ENCODE measurements at regions of chr22 and their contacts with region 1.

Region 1: DNA sequence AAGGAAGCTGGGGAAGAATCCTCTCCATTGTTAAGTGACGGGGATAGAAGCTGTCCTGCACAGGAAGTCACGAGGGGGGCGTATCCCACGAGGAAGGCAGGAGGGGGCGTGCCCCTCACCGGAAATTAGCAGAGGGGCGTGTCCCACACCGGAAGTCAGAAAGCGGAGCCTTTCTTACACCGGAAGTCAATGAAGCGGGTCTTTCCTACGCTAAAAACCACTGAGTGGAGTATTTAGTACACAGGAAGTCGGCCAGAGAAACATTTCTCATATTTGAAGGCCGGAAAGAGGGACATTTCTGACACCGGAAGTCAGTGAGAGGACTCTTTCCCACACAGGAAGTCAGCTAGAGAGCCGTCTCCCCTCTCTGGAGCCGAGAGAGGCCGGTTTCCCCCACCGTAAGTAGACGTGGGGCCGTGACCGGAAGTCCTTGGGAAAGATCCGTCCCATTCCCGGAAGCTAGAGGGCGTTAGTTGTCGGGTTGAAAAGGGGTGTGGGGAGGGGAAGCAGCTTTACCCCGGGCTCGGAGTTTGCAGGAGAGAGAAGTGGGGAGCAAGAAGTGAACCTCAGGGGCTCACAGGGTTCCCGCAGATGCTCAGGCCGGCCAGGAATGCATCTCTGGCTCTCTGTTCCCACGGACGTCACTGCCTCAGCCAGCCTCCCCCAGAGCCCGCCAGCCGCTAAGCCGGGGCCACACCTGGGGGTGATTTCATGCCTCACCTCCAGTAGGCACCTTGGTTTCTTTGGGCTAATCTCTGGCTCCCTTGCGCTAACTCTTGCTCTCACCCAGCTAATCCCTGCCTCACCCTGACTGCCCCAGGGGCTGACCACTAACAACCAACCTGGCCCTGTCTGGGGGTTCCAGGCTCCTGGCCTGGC is 15.4 kb downstream of the MIAT start:
- DNase-seq: peak; percentile 90 to 92
- H3K4me3 ChIP-seq: peak overlapping the region; percentile 57 to 82 (median 76)
- H3K27ac ChIP-seq: peak overlapping the region; percentile 94 to 98 (median 94)
- H3K4me1 ChIP-seq: peaks cover 19 to 32% of the 10 kb centered on the region in 2 donors
- H3K27me3 ChIP-seq: no peaks in the 10 kb centered on the region
- CTCF ChIP-seq: peak in 4 of 6 experiments; percentile 27 to 55 (median 50)
- POLR2A ChIP-seq: peak in 1 of 2 donors; percentile 51

Region 2: GRCh38 chr22:26364066-26365015 is 308.5 kb before region 1 on chr22:
- intact Hi-C with region 1: loop called (anchors 10 kb)
- DNase-seq: peak; percentile 70 to 73
- H3K4me3 ChIP-seq: no peak overlapping the region
- H3K27ac ChIP-seq: no peak overlapping the region
- H3K4me1 ChIP-seq: no peaks in the 10 kb centered on the region
- H3K27me3 ChIP-seq: no peaks in the 10 kb centered on the region
- CTCF ChIP-seq: peak in 4 of 6 experiments; percentile 38 to 77 (median 70)
- POLR2A ChIP-seq: no peak

Region 3: GRCh38 chr22:27804470-27805297 is 1131.9 kb after region 1 on chr22:
- intact Hi-C with region 1: loop called (anchors 10 kb)
- DNase-seq: peak; percentile 58 to 67
- H3K4me3 ChIP-seq: no peak overlapping the region
- H3K27ac ChIP-seq: no peak overlapping the region
- H3K4me1 ChIP-seq: peaks cover 13 to 20% of the 10 kb centered on the region in 2 donors
- H3K27me3 ChIP-seq: no peaks in the 10 kb centered on the region
- CTCF ChIP-seq: peak in 5 of 6 experiments; percentile 50 to 69 (median 59)
- POLR2A ChIP-seq: no peak